BJ (cell line): ENCODE measurements at regions of chr3 and their contacts with region 1.

Region 1: GRCh38 chr3:56783644-56784447 is 17.9 kb downstream of the ARHGEF3 start:
- DNase-seq: peak; percentile 66
- H3K4me3 ChIP-seq: no peak overlapping the region
- H3K27me3 ChIP-seq: no peaks in the 10 kb centered on the region; the same call in 1 of the 2 replicates
- CTCF ChIP-seq: no peak

Region 2: DNA sequence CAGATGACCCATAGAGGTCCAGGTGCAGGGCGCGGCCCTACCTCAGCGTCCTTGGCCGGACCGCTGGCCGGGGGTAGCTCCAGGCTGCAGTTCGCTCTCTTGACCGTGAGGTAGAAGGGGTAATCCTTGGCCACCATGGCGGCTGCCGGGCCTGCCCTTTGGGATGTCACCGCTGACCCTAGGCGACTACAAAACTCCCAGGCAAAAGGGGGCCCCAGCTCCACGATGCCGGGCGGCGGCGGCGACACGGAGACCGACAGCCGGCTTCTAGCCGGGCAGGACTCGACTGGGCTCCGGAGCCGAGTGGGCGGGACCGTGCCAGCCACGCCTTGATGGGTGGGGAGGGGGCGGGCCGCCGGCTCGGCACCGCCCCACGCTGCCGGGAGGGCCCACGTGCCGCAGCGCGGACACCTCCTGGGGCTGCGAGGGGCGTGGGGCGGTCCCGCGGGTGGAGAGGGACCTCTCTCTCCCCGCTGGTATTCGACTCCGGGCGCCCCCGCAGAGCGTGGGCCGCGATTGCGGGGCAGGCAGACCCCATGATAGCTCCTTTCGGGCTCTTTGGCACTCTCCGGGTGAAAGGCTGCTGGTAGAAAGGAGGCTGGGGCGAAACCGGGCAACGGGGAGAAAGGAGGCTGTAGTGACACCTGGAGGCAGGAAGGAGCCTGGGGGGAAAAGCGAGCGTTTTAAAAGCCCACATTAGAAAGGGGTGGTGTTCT is 18.0 kb after region 1 on chr3 and contains the start of gene ARHGEF3:
- CTCF ChIA-PET with region 1: interaction called, 32 read pairs
- POLR2A ChIA-PET with region 1: no interaction called
- DNase-seq: no peak
- H3K4me3 ChIP-seq: peak within 1 kb of the TSS; percentile 50
- H3K27me3 ChIP-seq: 0 out of 2 replicates have a peak, but pooled peaks cover 1% of the 10 kb centered on the region
- CTCF ChIP-seq: peak; percentile 49
- polyA plus RNA-seq, gene ARHGEF3: 2.0 and 2.1 TPM in 2 replicates

Region 3: GRCh38 chr3:56939834-56940233 is 156.0 kb after region 1 on chr3:
- CTCF ChIA-PET with region 1: no interaction called
- POLR2A ChIA-PET with region 1: no interaction called
- DNase-seq: no peak
- H3K4me3 ChIP-seq: no peak overlapping the region
- H3K27me3 ChIP-seq: no peaks in the 10 kb centered on the region; the same call in 1 of the 2 replicates
- CTCF ChIP-seq: no peak